ENCODE measurements at regions of chr11 and their contacts with region 1.

Region 1: GRCh38 chr11:65040847-65041621 is at the start of gene SAC3D1:
- DNase-seq: peak; percentile 96
- total RNA-seq, gene SAC3D1: 5.0 TPM

Region 2: GRCh38 chr11:65090628-65091027 is 49.6 kb after region 1 on chr11:
- intact Hi-C with region 1: no loop called
- DNase-seq: no peak

Region 3: GRCh38 chr11:65117216-65118096 is 76.4 kb after region 1 on chr11 and contains the start of gene ZNHIT2:
- intact Hi-C with region 1: loop called (anchors 5 kb)
- DNase-seq: peak; percentile 100
- total RNA-seq, gene ZNHIT2: 5.5 TPM

Measured in cardiac septum (tissue), 1 donor.